ENCODE measurements at regions of chr22 and their contacts with region 1.

Region 1: GRCh38 chr22:42437488-42438292 is 5.5 kb upstream of the NFAM1 start:
- DNase-seq: no peak
- H3K4me3 ChIP-seq: peak overlapping the region; percentile 36
- H3K27me3 ChIP-seq: peaks cover 11% of the 10 kb centered on the region
- CTCF ChIP-seq: peak; percentile 96

Region 2: GRCh38 chr22:41966607-41967240 is 471.0 kb before region 1 on chr22:
- CTCF ChIA-PET with region 1: interaction called, 18 read pairs
- POLR2A ChIA-PET with region 1: no interaction called
- DNase-seq: peak; percentile 56
- H3K4me3 ChIP-seq: no peak overlapping the region
- H3K27me3 ChIP-seq: 0 out of 2 replicates have a peak, but pooled peaks cover 1% of the 10 kb centered on the region
- CTCF ChIP-seq: peak; percentile 53

Region 3: GRCh38 chr22:42090596-42091454 is 346.9 kb before region 1 on chr22 and contains the start of gene NDUFA6:
- CTCF ChIA-PET with region 1: interaction called, 42 read pairs
- POLR2A ChIA-PET with region 1: no interaction called
- DNase-seq: peak; percentile 97
- H3K4me3 ChIP-seq: peak within 1 kb of the TSS; percentile 59
- H3K27me3 ChIP-seq: no peaks in the 10 kb centered on the region
- CTCF ChIP-seq: peak; percentile 92
- polyA plus RNA-seq, gene NDUFA6: 76.0 and 85.6 TPM in 2 replicates

Region 4: DNA sequence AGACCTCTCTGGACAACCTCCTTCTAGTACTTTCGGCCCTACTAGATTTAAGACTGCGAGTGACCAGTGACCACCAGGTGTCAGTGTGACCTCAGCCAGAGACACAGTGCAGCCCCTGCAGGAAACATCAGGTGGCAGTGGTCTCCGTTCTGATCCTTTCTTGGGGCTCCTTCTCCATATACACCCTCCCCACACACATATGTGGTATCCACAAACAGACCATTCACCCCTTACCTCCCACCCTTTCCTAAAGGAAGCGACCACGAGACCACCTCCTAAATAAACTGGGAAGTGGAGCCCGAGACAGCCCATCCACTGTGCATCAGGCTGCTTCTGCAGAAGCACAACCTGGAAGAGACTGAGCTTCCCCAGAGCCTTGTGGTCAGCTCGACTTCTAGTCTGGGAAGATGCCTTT is 268.6 kb before region 1 on chr22:
- CTCF ChIA-PET with region 1: interaction called, 44 read pairs
- POLR2A ChIA-PET with region 1: no interaction called
- DNase-seq: no peak
- H3K4me3 ChIP-seq: no peak overlapping the region
- H3K27me3 ChIP-seq: no peaks in the 10 kb centered on the region
- CTCF ChIP-seq: peak; percentile 94

Measured in BJ (cell line).